ENCODE measurements at regions of chr20 and their contacts with region 1.

Region 1: DNA sequence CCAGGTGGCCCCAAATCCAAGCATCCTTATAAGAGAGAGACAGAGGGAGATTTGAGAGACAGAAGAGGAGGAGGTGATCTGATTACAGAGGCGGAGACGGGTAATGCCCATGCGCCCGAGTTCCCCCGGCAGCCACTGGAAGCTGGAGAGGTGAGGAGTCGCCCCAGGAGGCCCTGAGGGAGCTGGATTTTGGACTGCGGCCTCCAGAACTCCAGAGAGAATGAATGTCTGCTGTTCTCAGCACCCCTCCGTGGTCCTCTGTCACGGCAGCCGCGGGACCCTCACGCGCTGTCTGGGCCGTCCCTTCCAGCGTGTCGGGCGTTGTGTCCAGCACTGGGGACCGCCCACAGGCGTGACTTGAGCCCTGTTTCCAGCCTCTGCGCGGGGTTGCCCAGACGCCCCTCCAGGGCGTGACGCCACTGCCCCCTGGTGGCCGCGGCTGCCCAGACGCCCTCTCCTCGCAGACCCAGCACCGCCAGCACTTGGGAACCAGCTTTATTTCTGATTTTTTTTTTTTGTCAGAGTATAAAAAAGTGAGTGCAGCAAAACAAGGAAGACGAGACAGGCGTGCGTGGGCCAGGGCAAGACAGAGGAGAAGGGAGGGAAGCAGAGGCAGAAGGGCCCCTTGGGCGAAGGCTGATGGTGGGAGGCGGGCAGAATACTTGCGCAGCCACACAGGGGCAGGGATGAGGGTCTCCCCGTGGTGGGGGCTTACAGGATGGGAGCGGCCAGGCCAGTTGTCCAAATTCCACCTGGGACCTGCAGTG is 4.1 kb upstream of the ZNF512B start:
- DNase-seq: peak; percentile 94
- ATAC-seq: peak; percentile 87

Region 2: DNA sequence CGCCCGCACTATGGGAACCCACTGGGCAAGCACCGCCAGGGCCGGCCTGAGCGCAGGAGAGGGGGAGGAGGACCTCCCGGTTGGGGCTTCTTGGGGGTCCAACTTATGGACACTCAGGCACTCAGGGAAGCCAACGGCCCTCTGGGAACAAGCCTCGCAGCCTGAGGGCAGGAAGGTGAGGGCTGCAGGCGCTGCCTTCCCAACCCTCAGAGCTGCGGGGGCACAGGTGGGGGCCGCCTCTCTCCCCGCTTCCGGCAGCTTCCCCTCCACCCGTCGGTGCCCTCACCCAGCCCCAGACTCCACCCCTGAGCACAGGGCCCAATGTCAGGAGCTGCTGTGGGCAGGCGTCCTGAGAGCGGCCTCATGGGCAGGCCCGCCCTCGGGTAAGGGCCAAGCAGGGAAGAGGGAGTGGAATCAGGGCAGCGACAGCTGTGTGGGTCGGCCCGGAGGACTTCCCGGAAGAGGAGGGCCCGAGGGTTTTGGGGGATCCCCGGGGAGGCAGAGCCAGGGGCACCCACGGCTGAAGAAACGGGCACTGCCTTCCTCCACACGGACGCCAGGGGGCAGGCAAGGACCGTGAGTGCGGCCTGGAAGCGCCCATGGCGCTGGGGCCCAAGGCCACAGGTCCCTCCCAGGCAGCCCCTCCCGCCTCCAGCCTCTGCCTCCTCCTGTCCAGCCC is 436.2 kb before region 1 on chr20:
- intact Hi-C with region 1: loop called (anchors 2 kb)
- DNase-seq: peak; percentile 92
- ATAC-seq: peak; percentile 93

Region 3: GRCh38 chr20:63830841-63831588 is 142.8 kb before region 1 on chr20 and contains the start of gene ZBTB46:
- intact Hi-C with region 1: no loop called
- DNase-seq: peak; percentile 81
- ATAC-seq: peak; percentile 31
- total RNA-seq, gene ZBTB46: 13.5 TPM

Region 4: GRCh38 chr20:63894358-63895201 is 79.2 kb before region 1 on chr20 and contains the start of gene DNAJC5:
- intact Hi-C with region 1: loop called (anchors 5 kb)
- DNase-seq: peak; percentile 97
- ATAC-seq: peak; percentile 96
- total RNA-seq, gene DNAJC5: 42.3 TPM

Region 5: GRCh38 chr20:63908008-63908624 is 65.7 kb before region 1 on chr20:
- intact Hi-C with region 1: loop called (anchors 5 kb)
- DNase-seq: no peak
- ATAC-seq: no peak